Sigmoid colon (tissue), 7 donors: ENCODE measurements at regions of chr12 and their contacts with region 1.

Region 1: DNA sequence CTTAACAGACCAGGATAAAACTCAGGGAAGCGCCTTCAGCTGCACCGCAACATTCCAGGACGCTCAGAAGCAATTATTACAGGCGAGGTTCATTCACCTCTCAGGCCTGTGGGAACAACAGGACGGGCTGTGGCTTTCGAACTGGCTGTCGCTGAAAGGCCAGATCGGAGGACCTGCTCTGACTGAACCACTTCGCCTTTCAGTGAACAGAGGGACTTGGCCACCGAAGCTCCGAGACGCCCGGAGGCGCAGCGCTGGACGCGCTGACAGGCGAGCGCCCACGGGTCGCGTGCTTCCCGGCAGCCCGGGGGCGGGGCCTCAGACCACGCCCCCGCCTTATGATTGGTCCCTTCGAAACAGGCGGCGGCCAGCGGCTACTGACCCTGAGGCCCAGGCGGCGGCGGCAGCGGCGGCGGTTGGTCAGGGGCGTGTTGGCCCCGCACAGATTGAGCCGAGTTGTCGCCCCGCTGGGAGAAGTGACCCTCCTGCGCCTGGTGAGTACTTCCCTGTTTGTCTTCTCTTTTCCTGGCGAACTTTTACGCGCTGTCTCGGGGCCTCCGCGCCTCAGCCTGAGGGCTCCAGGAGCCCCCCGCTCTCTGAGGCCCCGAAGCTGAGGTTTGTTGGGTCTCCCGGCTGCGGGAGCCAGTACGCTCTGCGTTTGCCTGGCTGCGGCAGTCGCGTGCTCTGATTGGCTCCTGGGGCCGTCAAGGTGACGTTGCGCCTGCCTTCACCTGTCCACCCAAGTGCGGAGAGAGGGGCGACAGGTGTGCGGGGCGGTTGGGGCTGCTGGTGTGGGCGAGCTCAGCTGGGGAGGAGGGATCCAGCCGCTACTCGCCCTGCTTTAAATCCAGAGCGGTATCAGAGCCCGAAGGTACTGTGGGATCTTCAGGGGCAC is at the start of gene GAS2L3:
- DNase-seq: peak; percentile 92
- H3K4me3 ChIP-seq: peak within 1 kb of the TSS; percentile 41 to 76 (median 64)
- H3K27ac ChIP-seq: peak within 1 kb of the TSS; percentile 50 to 80 (median 72)
- H3K4me1 ChIP-seq: peaks cover 0 to 20% (median 15%) of the 10 kb centered on the region in 4 donors
- H3K27me3 ChIP-seq: no peaks in the 10 kb centered on the region
- CTCF ChIP-seq: no peak
- EP300 ChIP-seq: no peak
- POLR2A ChIP-seq: peak; percentile 32 to 53
- total RNA-seq, gene GAS2L3: 1.6 to 6.1 (median 3.6) TPM

Region 2: GRCh38 chr12:100266835-100267618 is 306.5 kb before region 1 on chr12 and contains the starts of genes DEPDC4 and SCYL2:
- intact Hi-C with region 1: loop called (anchors 2 kb)
- DNase-seq: peak; percentile 99
- H3K4me3 ChIP-seq: peak within 1 kb of the TSS; percentile 80 to 99 (median 92)
- H3K27ac ChIP-seq: peak within 1 kb of the TSS; percentile 94 to 99 (median 98)
- H3K4me1 ChIP-seq: peaks cover 0 to 42% (median 29%) of the 10 kb centered on the region in 4 donors
- H3K27me3 ChIP-seq: no peaks in the 10 kb centered on the region
- CTCF ChIP-seq: no peak
- EP300 ChIP-seq: no peak
- POLR2A ChIP-seq: peak; percentile 58 to 79
- total RNA-seq, gene DEPDC4: 0.82 TPM in 1 of 4 donors, not detected in the others
- total RNA-seq, gene SCYL2: 52.4 to 97.3 (median 67.0) TPM